ENCODE measurements at regions of chr2 and their contacts with region 1.

Region 1: GRCh38 chr2:182240862-182241371 is 185.9 kb downstream of the PDE1A start:
- DNase-seq: no peak

Region 2: DNA sequence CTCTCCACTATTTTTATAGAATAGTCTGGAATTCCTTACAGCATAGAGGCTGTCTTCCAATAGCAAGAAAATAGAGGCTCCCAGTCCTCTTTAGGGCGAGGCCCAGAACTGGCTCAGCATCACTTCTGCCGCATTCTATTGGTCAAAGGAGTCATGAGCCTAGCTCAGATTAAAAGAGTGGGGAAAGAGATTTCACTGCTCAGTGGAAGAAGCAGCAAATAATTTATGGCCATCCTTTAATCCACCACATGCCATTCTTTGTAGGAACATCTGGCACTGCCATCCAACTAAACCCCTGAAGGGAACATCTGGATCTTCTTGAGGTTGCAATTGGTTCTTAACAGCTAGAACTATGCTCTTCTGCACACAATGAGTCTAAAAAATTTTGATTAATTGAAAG is 517.2 kb before region 1 on chr2:
- intact Hi-C with region 1: no loop called
- DNase-seq: no peak

Region 3: DNA sequence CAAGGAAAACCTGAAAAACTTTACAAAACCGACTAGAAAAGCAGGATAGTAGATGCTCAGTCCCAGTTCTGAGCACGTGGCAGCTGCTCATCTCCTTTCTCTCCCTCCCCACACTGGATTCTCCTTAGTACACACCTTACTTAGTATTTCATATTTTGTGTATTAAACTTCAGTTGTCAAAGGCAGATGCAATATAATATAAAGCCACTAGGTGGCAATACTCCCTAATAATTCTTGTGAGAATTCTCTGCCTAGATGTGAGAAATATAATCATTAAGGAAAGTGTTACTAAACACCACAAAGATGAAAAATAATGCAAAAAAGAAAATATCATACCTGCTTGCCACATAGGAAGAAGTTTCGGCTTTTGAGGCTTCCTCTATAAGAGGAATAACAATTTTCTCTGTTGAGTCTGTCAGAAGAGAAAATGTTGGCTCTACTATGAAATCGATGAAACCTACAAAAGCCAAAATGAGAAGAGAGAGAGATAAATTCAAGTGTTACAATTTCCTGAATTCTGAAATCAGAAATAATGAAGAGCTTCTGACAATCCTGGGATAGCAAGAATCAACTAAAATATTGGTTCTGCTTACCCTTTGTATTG is 54.7 kb before region 1 on chr2:
- intact Hi-C with region 1: loop called (anchors 5 kb)
- DNase-seq: no peak

Measured in cardiac septum (tissue), 1 donor.